Mammary epithelial cell (primary cell): ENCODE measurements at regions of chr18 and their contacts with region 1.

Region 1: DNA sequence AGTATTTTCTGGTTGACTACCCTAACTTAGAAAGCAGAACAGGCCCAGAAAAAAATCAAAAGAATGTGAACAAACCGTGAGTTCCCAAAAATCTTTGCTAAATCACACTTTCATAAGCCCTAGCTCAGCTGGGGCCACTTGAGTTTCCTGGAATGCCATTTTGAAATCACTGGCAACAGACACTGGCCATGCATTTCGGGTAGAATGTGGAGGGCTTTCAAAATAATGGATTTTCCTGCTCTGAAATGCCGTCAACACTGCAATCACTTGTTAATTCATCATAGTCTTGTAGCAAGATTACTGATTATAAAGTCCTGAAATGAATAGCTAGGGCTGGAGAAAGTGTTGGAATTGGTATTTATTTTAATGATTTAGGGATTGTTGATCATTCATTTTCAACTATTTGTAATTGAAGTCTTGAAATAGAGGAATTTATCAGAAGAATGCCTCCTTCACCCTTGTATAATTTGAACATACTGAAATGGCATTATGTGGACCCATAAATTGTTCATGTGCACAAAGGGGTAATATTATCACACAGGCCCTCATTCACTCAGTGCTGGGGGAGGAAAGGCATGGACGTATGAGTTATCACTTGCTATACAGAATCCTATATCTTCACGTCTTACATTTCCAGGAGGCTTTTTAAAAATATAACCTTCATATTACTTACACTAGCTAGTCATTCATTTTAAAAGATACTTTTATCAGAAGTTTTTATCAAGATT is 134.8 kb downstream of the DTNA start:
- DNase-seq: no peak
- H3K4me3 ChIP-seq: no peak overlapping the region
- H3K27ac ChIP-seq: no peak overlapping the region
- H3K4me1 ChIP-seq: no peaks in the 10 kb centered on the region
- H3K27me3 ChIP-seq: no peaks in the 10 kb centered on the region
- CTCF ChIP-seq: no peak

Region 2: DNA sequence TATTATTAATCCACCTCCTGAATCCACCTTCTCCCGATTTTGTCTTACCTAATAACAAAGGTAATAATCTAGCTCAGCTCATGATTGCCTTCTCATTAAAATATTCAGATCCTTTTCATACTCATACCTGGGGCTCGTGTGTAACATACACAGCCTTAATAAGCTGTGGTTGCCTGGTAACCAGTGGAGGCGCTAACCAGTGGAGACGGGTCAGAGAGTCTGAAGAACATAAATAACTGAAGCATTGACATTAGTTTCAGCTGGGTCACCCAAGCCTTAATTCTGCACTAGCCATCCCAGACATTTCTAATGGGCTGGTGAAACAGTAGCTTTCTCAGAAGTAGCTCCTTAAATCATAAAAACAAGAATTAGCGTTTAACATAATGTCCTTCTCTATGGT is 149.6 kb before region 1 on chr18:
- CTCF ChIA-PET with region 1: no interaction called
- dilution Hi-C with region 1: no loop called
- in situ Hi-C with region 1: no loop called
- intact Hi-C with region 1: no loop called
- DNase-seq: peak; percentile 30
- H3K4me3 ChIP-seq: no peak overlapping the region
- H3K27ac ChIP-seq: peak overlapping the region; percentile 54
- H3K4me1 ChIP-seq: peaks cover 36% of the 10 kb centered on the region
- H3K27me3 ChIP-seq: no peaks in the 10 kb centered on the region
- CTCF ChIP-seq: no peak

Region 3: GRCh38 chr18:34886177-34886576 is 41.3 kb after region 1 on chr18:
- CTCF ChIA-PET with region 1: no interaction called
- dilution Hi-C with region 1: no loop called
- in situ Hi-C with region 1: no loop called
- intact Hi-C with region 1: loop called (anchors 2 kb)
- DNase-seq: no peak
- H3K4me3 ChIP-seq: no peak overlapping the region
- H3K27ac ChIP-seq: no peak overlapping the region
- H3K4me1 ChIP-seq: no peaks in the 10 kb centered on the region
- H3K27me3 ChIP-seq: peaks cover 1% of the 10 kb centered on the region
- CTCF ChIP-seq: no peak